ENCODE measurements at regions of chr4 and their contacts with region 1.

Region 1: GRCh38 chr4:138576684-138577083 is 334.5 kb upstream of the SLC7A11 start:
- DNase-seq: peak; percentile 27
- H3K4me3 ChIP-seq: no peak overlapping the region
- H3K27ac ChIP-seq: no peak overlapping the region
- H3K4me1 ChIP-seq: no peaks in the 10 kb centered on the region
- H3K27me3 ChIP-seq: no peaks in the 10 kb centered on the region
- CTCF ChIP-seq: peak; percentile 62 to 68

Region 2: GRCh38 chr4:137124278-137124932 is 1452.3 kb before region 1 on chr4:
- CTCF ChIA-PET with region 1: interaction called, 3 read pairs
- dilution Hi-C with region 1: no loop called
- in situ Hi-C with region 1: no loop called
- intact Hi-C with region 1: loop called (anchors 5 kb)
- DNase-seq: peak; percentile 53
- H3K4me3 ChIP-seq: peak overlapping the region; percentile 38 to 88 (median 62)
- H3K27ac ChIP-seq: no peak overlapping the region
- H3K4me1 ChIP-seq: peaks cover 4% of the 10 kb centered on the region
- H3K27me3 ChIP-seq: no peaks in the 10 kb centered on the region
- CTCF ChIP-seq: peak; percentile 60 to 71

Region 3: DNA sequence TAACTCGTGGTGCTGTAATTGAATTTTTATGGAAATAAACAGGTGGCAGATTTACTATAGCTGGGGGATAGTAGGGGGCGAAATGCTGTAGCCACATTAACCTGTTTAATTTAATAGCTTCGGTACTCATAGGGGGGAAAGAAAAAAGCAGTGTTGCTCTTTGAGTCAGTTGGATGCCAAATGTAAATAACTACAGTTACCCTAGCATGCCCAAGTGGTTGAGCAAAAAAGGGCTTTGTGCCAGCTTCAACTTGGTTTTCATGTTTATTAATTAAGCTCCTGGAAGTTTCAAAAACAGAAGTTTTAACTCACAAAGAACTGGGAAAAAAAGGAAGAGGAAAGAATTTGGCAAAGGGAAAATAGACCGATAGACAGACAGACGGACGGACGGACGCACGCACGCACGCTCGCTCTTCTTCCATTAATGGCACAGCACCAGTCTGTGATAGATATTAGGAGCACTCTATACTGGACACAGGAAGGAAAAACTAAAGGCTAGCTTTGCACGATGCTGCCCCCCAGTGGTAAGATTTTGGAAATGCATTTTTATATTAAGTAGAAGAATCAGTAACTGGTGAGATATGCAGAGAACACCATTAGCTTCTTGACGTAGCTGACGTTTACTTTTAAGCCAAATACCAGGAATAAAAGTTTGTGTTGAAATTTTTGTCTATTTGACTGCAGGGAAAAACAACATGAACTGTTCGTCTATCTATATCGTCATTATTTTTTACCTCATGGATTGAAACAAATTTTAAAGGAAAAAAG is 486.4 kb before region 1 on chr4:
- CTCF ChIA-PET with region 1: no interaction called
- dilution Hi-C with region 1: no loop called
- in situ Hi-C with region 1: no loop called
- intact Hi-C with region 1: loop called (anchors 1 kb)
- DNase-seq: peak; percentile 75
- H3K4me3 ChIP-seq: peak overlapping the region; percentile 13 to 26 (median 13)
- H3K27ac ChIP-seq: no peak overlapping the region
- H3K4me1 ChIP-seq: peaks cover 5% of the 10 kb centered on the region
- H3K27me3 ChIP-seq: no peaks in the 10 kb centered on the region
- CTCF ChIP-seq: peak; percentile 67 to 71

Region 4: DNA sequence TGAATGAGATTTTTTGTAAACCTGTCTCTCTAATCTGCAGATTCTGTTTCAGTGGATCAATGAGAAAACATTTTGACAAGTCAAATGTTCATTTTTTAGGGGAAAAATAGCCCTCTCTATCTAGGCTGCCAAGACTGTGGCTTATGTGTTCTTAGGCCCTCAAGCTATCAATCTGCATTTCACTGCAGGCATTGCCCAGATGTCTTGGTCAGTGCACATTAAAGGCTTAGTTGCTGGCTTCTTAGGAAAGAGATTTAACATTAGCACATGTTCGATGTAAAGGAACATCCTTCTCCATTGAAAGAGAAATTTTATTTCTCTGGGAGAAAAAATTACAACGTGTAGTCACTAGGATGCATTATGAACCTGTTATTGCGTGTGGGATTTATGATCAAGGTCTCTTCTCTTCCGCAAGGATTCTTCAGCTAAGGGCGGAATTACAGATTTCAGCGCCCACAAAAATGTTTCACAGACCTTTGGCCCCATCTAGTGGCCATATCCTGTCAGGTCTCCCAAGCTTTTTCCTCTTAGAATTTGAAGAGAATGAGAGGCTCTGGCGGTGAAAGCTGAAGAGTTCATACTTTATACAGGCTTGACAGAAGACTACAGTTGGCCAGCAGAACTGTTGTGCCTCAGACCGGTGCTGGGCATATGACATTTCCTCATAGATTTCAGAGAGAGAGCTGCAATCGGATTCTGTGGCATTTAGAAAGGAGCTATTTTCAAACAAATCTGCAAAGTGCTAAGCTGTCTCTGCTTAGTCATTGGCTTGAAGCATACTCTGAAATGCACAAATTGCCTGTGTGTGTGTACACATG is 294.3 kb after region 1 on chr4:
- CTCF ChIA-PET with region 1: interaction called, 10 read pairs
- dilution Hi-C with region 1: no loop called
- in situ Hi-C with region 1: no loop called
- intact Hi-C with region 1: loop called (anchors 1 kb)
- DNase-seq: peak; percentile 52
- H3K4me3 ChIP-seq: no peak overlapping the region
- H3K27ac ChIP-seq: no peak overlapping the region
- H3K4me1 ChIP-seq: peaks cover 6% of the 10 kb centered on the region
- H3K27me3 ChIP-seq: no peaks in the 10 kb centered on the region
- CTCF ChIP-seq: peak; percentile 79 to 80

Region 5: GRCh38 chr4:138938366-138938690 is 361.6 kb after region 1 on chr4:
- CTCF ChIA-PET with region 1: interaction called, 3 read pairs
- dilution Hi-C with region 1: no loop called
- in situ Hi-C with region 1: no loop called
- intact Hi-C with region 1: loop called (anchors 1 kb)
- DNase-seq: peak; percentile 48
- H3K4me3 ChIP-seq: no peak overlapping the region
- H3K27ac ChIP-seq: no peak overlapping the region
- H3K4me1 ChIP-seq: peaks cover 8% of the 10 kb centered on the region
- H3K27me3 ChIP-seq: no peaks in the 10 kb centered on the region
- CTCF ChIP-seq: peak; percentile 35 to 60

Region 6: GRCh38 chr4:139711461-139711860 is 1134.8 kb after region 1 on chr4:
- CTCF ChIA-PET with region 1: no interaction called
- dilution Hi-C with region 1: no loop called
- in situ Hi-C with region 1: no loop called
- intact Hi-C with region 1: no loop called
- DNase-seq: no peak
- H3K4me3 ChIP-seq: no peak overlapping the region
- H3K27ac ChIP-seq: no peak overlapping the region
- H3K4me1 ChIP-seq: no peaks in the 10 kb centered on the region
- H3K27me3 ChIP-seq: no peaks in the 10 kb centered on the region
- CTCF ChIP-seq: no peak